ENCODE measurements at regions of chr3 and their contacts with region 1.

Region 1: GRCh38 chr3:169966428-169966950 is at the start of gene SEC62:
- DNase-seq: peak; percentile 90
- H3K4me3 Mint-ChIP-seq: peak within 1 kb of the TSS; percentile 91
- H3K27ac Mint-ChIP-seq: peak within 1 kb of the TSS; percentile 99
- H3K4me1 Mint-ChIP-seq: peaks cover 42% of the 10 kb centered on the region
- H3K27me3 Mint-ChIP-seq: peaks cover 2% of the 10 kb centered on the region
- total RNA-seq, gene SEC62: 75.4 and 85.7 TPM in 2 replicates

Region 2: GRCh38 chr3:169305460-169305859 is 661.0 kb before region 1 on chr3:
- intact Hi-C with region 1: no loop called
- DNase-seq: no peak
- H3K4me3 Mint-ChIP-seq: no peak overlapping the region
- H3K27ac Mint-ChIP-seq: no peak overlapping the region
- H3K4me1 Mint-ChIP-seq: no peaks in the 10 kb centered on the region
- H3K27me3 Mint-ChIP-seq: peaks cover 2% of the 10 kb centered on the region

Region 3: DNA sequence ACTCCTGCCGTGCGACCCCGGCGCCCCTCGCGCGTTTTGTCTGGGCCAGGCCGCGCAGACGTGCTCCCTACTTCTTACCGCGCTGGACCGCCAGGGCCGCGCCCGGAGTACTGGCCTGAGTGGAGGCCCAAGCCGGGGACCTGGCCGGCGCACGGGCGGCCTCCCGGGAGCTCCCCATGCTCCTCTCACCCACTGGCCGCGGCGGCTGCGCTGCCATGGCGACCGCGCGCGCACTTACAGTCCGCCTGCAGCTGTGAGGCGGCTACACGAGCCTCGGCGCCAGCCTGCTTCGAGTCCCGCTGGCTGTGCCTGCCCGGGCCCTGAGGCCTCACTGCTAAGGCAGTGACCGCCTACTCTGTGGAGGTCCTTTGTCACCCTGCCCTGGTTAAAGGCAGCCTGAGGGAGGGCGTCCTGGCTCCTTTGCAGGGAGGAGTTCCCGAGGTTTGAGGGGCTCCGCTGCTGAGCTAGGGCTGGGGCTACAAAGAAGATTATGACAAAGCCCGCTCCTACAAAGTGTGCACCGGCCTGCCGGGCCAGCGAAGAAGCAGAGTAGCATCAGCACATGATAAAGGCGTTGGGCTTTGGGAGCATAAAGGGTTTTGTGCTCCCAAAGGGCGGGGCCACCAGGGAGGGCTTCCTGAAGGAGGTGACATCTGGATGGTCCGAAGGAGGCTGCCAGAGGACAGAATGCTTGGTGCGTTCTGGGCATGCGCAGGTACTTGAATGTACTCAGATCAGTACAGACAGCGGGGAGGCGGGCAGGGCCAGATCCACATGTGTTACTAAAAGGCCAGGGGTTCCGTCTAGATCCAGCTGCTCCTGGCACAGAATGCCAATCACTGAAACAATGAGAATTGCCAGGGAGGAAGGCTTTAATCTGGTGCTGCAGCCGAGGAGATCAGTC is 153.9 kb before region 1 on chr3 and contains the starts of genes LRRC34 and LRRIQ4:
- intact Hi-C with region 1: loop called (anchors 1 kb)
- DNase-seq: peak; percentile 64
- H3K4me3 Mint-ChIP-seq: peak within 1 kb of the TSS; percentile 83
- H3K27ac Mint-ChIP-seq: peak within 1 kb of the TSS; percentile 89
- H3K4me1 Mint-ChIP-seq: peaks cover 49% of the 10 kb centered on the region
- H3K27me3 Mint-ChIP-seq: peaks cover 6% of the 10 kb centered on the region
- total RNA-seq, gene LRRC34: 2.8 and 2.9 TPM in 2 replicates
- total RNA-seq, gene LRRIQ4: 0.10 and 0.12 TPM in 2 replicates

Region 4: GRCh38 chr3:169863458-169863899 is 103.0 kb before region 1 on chr3:
- intact Hi-C with region 1: loop called (anchors 1 kb)
- DNase-seq: peak; percentile 44
- H3K4me3 Mint-ChIP-seq: no peak overlapping the region
- H3K27ac Mint-ChIP-seq: no peak overlapping the region
- H3K4me1 Mint-ChIP-seq: peaks cover 24% of the 10 kb centered on the region
- H3K27me3 Mint-ChIP-seq: peaks cover 25% of the 10 kb centered on the region

Region 5: DNA sequence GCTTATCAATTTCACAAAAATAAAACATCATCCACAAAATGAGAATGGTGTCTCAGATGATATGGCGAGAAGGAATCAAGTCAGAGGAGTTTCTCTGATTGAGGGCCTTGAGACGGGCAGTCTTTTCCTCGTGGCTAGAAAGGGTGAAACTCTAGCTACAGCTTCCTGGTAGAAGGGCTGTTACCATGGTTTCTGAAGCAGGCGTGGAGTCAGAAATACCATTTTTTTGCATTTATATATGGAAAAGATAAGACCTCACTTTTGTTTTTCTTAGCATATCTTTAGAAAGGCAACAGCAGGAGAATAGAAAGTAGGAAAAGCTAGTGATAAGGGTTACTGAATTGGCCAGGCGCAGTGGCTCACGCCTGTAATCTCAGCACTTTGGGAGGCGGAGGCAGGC is 72.4 kb before region 1 on chr3:
- intact Hi-C with region 1: no loop called
- DNase-seq: no peak
- H3K4me3 Mint-ChIP-seq: no peak overlapping the region
- H3K27ac Mint-ChIP-seq: no peak overlapping the region
- H3K4me1 Mint-ChIP-seq: no peaks in the 10 kb centered on the region
- H3K27me3 Mint-ChIP-seq: peaks cover 3% of the 10 kb centered on the region

Region 6: DNA sequence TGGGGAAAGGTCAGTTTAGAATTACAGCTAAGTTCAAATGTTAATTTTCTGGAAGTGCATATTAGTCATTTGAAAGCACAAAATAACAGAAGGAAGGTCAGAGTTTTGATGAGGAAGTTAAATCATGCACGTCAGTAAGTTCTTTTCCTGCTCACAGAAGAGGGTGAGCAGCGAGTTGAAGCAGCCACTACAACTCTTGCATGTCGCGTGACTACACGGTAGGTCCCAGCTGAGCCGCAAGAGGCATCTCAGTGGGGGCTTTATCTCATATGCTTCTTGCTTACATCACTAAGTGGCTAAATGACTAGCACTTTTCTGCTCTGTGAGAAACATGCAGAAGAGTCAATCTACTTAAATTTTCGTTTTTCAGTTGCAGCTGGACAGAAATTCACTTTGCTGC is 21.2 kb before region 1 on chr3:
- intact Hi-C with region 1: loop called (anchors 1 kb)
- DNase-seq: no peak
- H3K4me3 Mint-ChIP-seq: no peak overlapping the region
- H3K27ac Mint-ChIP-seq: no peak overlapping the region
- H3K4me1 Mint-ChIP-seq: peaks cover 15% of the 10 kb centered on the region
- H3K27me3 Mint-ChIP-seq: no peaks in the 10 kb centered on the region

Region 7: GRCh38 chr3:169980055-169980454 is 13.6 kb after region 1 on chr3:
- intact Hi-C with region 1: loop called (anchors 1 kb)
- DNase-seq: no peak
- H3K4me3 Mint-ChIP-seq: no peak overlapping the region
- H3K27ac Mint-ChIP-seq: peak overlapping the region; percentile 35
- H3K4me1 Mint-ChIP-seq: peaks cover 9% of the 10 kb centered on the region
- H3K27me3 Mint-ChIP-seq: no peaks in the 10 kb centered on the region

Region 8: GRCh38 chr3:169998568-169999131 is 32.2 kb after region 1 on chr3:
- intact Hi-C with region 1: loop called (anchors 1 kb)
- DNase-seq: no peak
- H3K4me3 Mint-ChIP-seq: no peak overlapping the region
- H3K27ac Mint-ChIP-seq: peak overlapping the region; percentile 67
- H3K4me1 Mint-ChIP-seq: peaks cover 26% of the 10 kb centered on the region
- H3K27me3 Mint-ChIP-seq: no peaks in the 10 kb centered on the region

Region 9: DNA sequence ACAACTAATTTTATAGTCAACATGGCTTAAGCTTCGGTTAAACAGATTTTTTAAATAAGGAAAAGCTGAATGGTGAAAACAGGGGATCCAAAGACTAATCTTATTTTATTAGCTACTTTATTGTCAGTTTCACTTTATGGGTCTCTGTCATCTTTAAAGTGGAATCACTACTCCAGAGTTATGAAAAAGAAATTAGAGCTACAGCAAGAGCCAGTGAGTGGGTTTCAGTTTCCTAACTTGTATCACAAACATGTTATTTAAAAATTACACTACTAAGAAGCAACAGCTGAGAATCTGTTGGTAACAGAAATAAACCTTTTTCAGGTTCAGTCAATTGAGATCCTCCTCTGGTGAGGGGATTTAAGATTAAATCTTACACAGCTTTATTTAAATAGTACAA is 205.1 kb after region 1 on chr3:
- intact Hi-C with region 1: no loop called
- DNase-seq: no peak
- H3K4me3 Mint-ChIP-seq: peak overlapping the region; percentile 50
- H3K27ac Mint-ChIP-seq: peak overlapping the region; percentile 43
- H3K4me1 Mint-ChIP-seq: peaks cover 49% of the 10 kb centered on the region
- H3K27me3 Mint-ChIP-seq: no peaks in the 10 kb centered on the region